ENCODE measurements at regions of chr14 and their contacts with region 1.

Region 1: DNA sequence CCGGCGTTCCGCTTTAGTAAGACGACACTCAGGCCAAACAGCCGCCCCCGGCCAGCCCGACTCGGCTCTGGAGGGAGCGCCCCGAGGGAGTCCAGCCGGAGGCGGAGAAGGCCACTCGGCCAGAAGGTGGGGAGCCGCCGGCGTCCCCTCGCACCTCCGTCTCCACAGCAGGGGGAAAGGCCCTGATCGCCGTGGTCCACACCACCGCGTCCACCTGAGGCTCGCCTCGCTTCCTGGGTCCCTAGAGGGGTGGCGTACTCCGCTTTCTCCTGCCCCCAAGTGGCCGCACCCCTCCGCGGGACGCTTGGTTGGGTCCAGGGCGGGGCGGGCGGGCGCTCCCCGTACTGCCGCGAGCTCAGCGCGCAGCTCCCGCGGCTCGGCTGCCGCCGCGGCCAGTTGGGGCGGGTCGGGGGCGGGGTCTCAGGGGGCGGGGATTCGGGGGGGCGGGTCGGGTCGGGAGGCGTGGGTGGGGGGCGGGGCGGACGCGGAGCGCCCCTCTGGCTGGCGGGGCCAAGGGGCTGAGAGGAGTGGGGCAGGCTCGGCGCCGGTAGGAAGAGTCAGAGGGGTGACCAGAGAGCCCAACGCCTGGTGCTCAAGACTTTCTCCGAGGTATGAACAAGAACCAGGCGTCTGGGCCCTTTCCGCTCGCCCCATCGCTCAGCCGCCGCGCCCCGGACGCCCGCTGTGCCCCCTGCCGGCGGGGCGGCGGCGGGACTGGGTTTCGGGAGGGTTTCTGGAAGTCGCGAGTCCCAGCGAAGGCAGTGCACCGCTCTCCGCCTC is at the start of gene FRMD6:
- DNase-seq: no peak
- H3K4me3 ChIP-seq: peak within 1 kb of the TSS; percentile 83
- CTCF ChIP-seq: peak; percentile 59

Region 2: DNA sequence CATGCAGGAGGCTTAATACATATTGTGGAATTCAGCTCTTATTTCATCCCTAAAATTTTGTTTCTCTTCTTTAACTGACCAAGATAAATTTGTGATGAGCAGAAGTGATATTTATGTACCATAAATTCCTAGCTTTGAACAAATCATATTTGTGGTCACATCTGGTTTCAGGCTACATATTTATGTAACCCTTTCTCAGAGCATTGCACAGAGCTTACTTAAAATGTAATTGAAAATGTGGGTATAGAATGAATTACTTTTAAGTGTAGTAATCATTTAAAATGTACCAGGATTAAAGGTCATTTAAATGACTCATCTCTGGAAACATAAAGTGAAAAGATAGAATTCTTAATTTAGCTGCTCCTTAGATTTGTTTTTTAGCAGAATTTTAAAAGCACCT is 129.8 kb before region 1 on chr14:
- CTCF ChIA-PET with region 1: interaction called, 9 read pairs
- POLR2A ChIA-PET with region 1: interaction called, 13 read pairs
- DNase-seq: peak; percentile 88
- H3K4me3 ChIP-seq: no peak overlapping the region
- CTCF ChIP-seq: no peak

Region 3: DNA sequence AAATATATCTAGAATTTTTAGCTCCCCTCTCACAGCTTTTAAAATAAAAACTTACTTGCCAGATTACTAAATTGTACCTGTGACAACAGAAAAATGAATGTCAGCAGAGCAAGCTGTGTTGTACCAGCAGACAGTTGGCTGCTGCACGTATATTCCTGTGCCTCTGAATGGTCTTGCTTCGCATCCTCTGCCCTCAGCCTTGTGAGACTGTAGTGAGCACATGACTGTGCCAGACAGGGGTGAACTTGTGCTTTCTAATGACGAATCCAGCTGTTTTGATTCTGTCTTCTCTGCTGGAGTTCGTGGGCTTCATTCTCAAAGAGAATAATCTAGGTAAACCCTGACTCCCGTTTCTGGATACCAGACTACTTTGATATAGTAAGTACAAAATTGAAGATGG is 58.2 kb before region 1 on chr14:
- CTCF ChIA-PET with region 1: interaction called, 3 read pairs
- POLR2A ChIA-PET with region 1: interaction called, 14 read pairs
- DNase-seq: no peak
- H3K4me3 ChIP-seq: no peak overlapping the region
- CTCF ChIP-seq: no peak

Region 4: GRCh38 chr14:51607711-51608110 is 43.9 kb before region 1 on chr14:
- CTCF ChIA-PET with region 1: interaction called, 5 read pairs
- POLR2A ChIA-PET with region 1: interaction called, 11 read pairs
- DNase-seq: peak; percentile 93
- H3K4me3 ChIP-seq: peak overlapping the region; percentile 33
- CTCF ChIP-seq: no peak

Region 5: DNA sequence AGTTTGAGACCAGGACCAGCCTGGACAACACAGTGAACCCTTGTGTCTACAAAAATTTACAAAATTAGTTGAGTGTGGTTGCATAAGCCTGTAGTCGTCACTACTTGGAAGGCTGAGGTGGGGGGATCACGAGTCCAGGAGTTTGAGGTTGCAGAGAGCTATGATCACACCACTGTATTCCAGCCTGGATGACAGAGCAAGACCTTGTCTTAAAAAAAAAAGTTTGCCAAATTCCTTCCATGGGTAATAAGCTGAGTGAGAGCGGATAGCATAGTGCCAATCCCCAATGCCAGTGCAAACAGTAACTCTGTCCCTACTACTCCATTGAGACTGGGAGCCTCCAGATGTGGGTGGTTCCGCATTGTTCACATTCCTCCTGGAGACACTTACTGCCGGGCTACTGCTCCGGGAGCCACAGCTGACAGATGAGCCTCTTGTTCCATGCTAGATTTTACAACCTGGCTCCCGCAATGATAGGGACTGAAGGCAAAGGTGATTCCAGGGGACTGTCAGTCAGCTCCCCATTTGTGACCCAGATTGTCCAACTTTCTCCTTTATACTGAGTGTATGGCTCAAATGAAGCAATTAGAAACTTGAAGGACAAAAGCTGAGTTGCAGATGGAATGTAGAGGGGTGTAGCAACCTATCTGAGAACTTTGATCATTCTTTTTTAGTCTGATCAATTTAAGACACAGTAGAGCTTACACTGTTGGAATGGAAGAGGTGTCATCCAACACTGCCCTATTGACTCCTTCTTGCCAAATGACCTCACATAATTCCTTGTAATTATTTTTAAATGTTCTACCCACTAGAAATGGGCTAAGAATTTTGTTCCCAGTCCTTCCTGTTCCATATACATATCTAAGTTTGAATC is 13.3 kb before region 1 on chr14:
- CTCF ChIA-PET with region 1: interaction called, 6 read pairs
- POLR2A ChIA-PET with region 1: interaction called, 14 read pairs
- DNase-seq: no peak
- H3K4me3 ChIP-seq: no peak overlapping the region
- CTCF ChIP-seq: no peak

Measured in AG04449 (cell line).